Calu3 (cell line): ENCODE measurements at regions of chr10 and their contacts with region 1.

Region 1: DNA sequence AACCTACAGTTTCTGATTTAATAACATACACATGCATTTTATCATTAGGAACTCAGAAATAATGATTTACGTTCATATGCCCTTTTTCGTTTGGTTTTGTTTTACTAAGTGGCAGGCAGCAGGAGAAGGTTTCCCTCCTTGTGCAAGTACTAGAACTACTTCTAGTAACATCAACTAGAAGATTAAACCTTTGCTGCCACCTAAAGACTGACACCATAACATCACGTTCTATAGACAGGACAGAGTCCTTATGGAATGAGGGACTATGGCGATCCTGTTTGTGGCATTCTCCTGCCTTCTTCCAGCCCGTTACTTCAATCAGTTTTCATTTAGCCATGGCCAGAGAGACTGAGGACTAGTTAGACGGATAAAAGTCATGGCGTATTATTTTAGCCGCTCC is 53.2 kb downstream of the GAD2 start:
- DNase-seq: peak; percentile 24
- H3K4me3 Mint-ChIP-seq: no peak overlapping the region
- H3K27ac Mint-ChIP-seq: no peak overlapping the region
- H3K4me1 Mint-ChIP-seq: no peaks in the 10 kb centered on the region
- H3K27me3 Mint-ChIP-seq: peaks cover 19% of the 10 kb centered on the region
- CTCF ChIP-seq: peak; percentile 31

Region 2: GRCh38 chr10:25725918-25726716 is 543.6 kb before region 1 on chr10:
- CTCF ChIA-PET with region 1: no interaction called
- intact Hi-C with region 1: loop called (anchors 1 kb)
- DNase-seq: peak; percentile 46
- H3K4me3 Mint-ChIP-seq: no peak overlapping the region
- H3K27ac Mint-ChIP-seq: no peak overlapping the region
- H3K4me1 Mint-ChIP-seq: no peaks in the 10 kb centered on the region
- H3K27me3 Mint-ChIP-seq: peaks cover 59% of the 10 kb centered on the region
- CTCF ChIP-seq: no peak

Region 3: DNA sequence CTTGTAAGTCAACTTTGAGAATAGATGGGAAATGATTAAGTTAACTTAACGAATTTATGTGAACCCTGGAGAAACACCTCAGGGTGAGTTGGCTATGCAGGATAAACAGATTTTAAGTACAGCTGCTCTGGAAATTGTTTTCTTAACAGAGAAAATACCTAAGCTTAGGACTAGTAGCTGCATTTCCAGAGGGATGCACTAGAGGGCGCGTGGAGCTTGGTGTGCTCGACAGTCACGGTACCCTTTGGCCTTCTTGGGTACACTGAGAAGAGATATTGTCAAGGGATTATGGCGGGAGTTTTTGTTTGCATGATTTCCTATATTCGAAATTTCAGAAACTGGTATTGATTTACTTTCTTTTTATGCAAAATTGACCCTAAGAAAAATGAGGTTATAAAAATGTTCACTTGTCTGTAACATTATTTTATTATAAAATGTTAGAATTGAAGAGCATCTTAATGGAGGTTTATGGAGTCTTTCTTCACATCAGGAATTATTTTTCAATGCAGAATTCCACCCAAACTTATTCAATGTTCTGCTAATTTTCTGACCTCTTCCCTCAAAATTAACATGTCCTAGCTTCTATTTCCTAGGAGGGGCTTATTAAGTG is 394.1 kb before region 1 on chr10:
- CTCF ChIA-PET with region 1: interaction called, 7 read pairs
- intact Hi-C with region 1: loop called (anchors 1 kb)
- DNase-seq: peak; percentile 78
- H3K4me3 Mint-ChIP-seq: no peak overlapping the region
- H3K27ac Mint-ChIP-seq: no peak overlapping the region
- H3K4me1 Mint-ChIP-seq: no peaks in the 10 kb centered on the region
- H3K27me3 Mint-ChIP-seq: peaks cover 16% of the 10 kb centered on the region
- CTCF ChIP-seq: peak; percentile 82

Region 4: DNA sequence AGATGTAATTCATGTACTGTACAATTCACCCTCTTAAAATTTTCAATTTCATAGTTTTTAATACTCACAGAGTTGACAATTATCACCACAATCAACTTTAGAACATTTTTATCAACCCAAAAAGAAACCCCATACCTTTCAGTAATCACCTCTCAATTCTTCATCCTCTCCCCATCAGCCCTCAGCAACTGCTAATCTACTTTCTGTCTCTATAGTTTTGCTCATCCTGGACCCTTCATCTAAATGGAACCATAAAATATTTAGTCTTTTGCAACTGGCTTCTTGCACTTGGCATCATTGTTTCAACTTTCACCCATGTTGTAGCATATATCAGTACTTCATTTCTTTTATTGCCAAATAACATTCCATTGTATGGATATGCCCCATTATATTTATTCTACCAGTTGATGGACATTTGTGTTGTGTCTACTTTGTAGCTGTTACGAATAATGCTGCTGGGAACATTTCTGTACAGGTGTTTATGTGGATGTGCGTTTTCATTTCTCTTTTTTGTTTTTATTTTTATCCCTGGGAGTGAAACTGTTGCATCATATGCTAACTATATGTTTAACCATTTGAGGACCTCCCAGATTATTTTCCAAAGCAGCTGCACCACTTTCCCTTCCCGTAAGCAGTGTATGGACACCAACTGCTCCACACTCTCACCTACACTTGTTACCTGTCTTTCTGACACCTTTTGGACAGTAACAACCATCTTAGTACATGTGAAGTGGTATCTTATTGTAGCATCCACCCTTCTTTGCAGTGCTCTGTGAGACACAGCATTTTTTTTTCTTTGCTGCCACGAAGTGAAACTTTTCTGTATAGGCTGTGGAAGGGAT is 103.0 kb after region 1 on chr10:
- CTCF ChIA-PET with region 1: no interaction called
- intact Hi-C with region 1: no loop called
- DNase-seq: no peak
- H3K4me3 Mint-ChIP-seq: no peak overlapping the region
- H3K27ac Mint-ChIP-seq: no peak overlapping the region
- H3K4me1 Mint-ChIP-seq: peaks cover under 1% of the 10 kb centered on the region
- H3K27me3 Mint-ChIP-seq: no peaks in the 10 kb centered on the region
- CTCF ChIP-seq: no peak